GM12878 (cell line): ENCODE measurements at regions of chr2 and their contacts with region 1.

Region 1: GRCh38 chr2:147989809-147990403 is 30.6 kb downstream of the ORC4 start:
- DNase-seq: peak; percentile 31
- ATAC-seq: peak; percentile 91
- H3K4me3 ChIP-seq: no peak overlapping the region
- H3K27ac ChIP-seq: no peak overlapping the region
- H3K4me1 ChIP-seq: peaks cover 3% of the 10 kb centered on the region; the same call in 1 of the 2 replicates
- H3K27me3 ChIP-seq: no peaks in the 10 kb centered on the region
- CTCF ChIP-seq: peak; percentile 47 to 93 (median 64); a peak in 4 of 6 replicates
- EP300 ChIP-seq: no peak
- POLR2A ChIP-seq: no peak
- RAD21 ChIP-seq: peak; percentile 95

Region 2: DNA sequence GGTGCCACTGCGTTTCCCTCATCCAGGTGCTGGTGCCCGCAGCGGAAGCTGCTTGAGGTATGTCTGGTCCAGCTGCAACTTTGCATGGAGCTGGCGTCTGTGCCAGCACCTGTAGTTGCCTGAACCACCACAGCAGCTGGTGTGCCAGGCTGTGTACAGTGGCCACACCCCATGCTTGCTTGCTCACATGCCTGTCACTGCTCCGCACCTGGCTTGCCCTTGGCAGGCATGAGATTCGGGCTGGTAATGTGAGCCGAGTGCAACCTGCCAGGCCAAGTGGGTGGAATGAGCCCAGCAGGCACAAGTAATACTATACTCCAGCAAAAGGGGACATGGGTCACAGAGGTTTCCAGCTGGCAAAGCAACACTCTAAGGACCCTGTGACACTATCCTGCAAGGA is 1268.4 kb before region 1 on chr2:
- CTCF ChIA-PET with region 1: no interaction called
- POLR2A ChIA-PET with region 1: no interaction called
- RAD21 ChIA-PET with region 1: no interaction called
- SMC1A ChIA-PET with region 1: no interaction called
- in situ Hi-C with region 1: no loop called
- intact Hi-C with region 1: no loop called
- DNase-seq: no peak
- ATAC-seq: no peak
- H3K4me3 ChIP-seq: no peak overlapping the region
- H3K27ac ChIP-seq: no peak overlapping the region
- H3K4me1 ChIP-seq: no peaks in the 10 kb centered on the region
- H3K27me3 ChIP-seq: no peaks in the 10 kb centered on the region
- CTCF ChIP-seq: no peak
- EP300 ChIP-seq: no peak
- POLR2A ChIP-seq: no peak
- RAD21 ChIP-seq: no peak

Region 3: DNA sequence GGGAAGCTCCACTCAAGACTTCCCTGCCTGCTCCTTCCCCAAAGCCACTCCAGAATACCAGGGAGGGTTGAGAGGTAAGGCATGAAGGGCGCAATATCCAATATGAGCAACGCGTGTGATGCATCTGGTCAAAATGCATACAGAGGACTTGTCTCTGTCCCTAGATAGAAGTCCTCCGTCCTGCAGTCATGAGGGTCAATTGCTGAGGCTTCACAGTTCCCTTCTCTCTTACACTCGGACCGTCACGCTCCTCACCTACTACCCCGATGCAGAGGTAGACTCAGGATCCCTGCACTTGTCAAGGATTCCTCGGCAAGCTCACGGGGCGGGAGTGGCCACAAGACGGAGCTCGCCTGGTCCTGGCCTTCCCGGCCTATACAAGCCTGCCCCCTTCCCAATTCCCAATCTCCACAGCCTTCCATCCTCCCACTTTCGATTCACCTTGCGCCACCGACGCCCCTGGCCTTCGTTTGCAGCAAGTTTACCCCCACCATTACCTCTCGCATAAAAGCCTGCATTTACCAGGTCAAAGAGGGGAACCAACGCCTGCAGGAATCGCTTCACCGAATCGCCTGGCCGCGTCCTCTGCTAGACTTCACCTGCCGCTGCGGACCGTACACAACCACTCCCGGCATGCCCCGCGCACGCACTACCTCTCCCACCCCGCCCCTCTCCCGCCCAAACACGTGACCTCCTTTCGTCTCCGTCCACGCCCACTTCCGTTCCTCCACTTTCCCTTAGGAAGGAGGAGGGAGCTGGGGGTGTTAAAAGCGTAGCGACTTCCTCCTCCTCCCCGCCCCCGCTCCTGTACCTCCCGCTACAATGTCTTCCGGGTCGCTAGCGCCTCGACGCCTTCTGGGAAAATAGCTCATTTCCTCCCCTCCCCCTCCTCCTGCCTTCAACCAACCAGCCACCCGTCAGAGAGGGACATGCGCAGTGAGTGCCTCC is 30.5 kb after region 1 on chr2 and contains the start of gene ORC4:
- CTCF ChIA-PET with region 1: interaction called, 11 read pairs
- POLR2A ChIA-PET with region 1: interaction called, 8 read pairs
- RAD21 ChIA-PET with region 1: interaction called, 18 read pairs
- SMC1A ChIA-PET with region 1: interaction called, 10 read pairs
- in situ Hi-C with region 1: no loop called
- intact Hi-C with region 1: no loop called
- DNase-seq: peak; percentile 99
- ATAC-seq: peak; percentile 81
- H3K4me3 ChIP-seq: peak within 1 kb of the TSS; percentile 99
- H3K27ac ChIP-seq: peak within 1 kb of the TSS; percentile 96
- H3K4me1 ChIP-seq: no peaks in the 10 kb centered on the region
- H3K27me3 ChIP-seq: no peaks in the 10 kb centered on the region
- CTCF ChIP-seq: peak in 2 of 3 experiments; percentile 19 to 26; a peak in 2 of 6 replicates
- EP300 ChIP-seq: no peak; a peak in 1 of 4 replicates
- POLR2A ChIP-seq: peak; percentile 90
- RAD21 ChIP-seq: peak; percentile 19; the same call in 1 of the 2 replicates
- polyA plus RNA-seq, gene ORC4: 31.3 to 71.3 TPM

Region 4: GRCh38 chr2:148048475-148049221 is 58.7 kb after region 1 on chr2:
- CTCF ChIA-PET with region 1: interaction called, 3 read pairs
- POLR2A ChIA-PET with region 1: no interaction called
- RAD21 ChIA-PET with region 1: interaction called, 18 read pairs
- SMC1A ChIA-PET with region 1: interaction called, 5 read pairs
- in situ Hi-C with region 1: no loop called
- intact Hi-C with region 1: loop called (anchors 2 kb)
- DNase-seq: peak; percentile 89
- ATAC-seq: peak; percentile 82
- H3K4me3 ChIP-seq: 0 out of 2 replicates have a peak overlapping the region, but pooled peaks have one; percentile 7
- H3K27ac ChIP-seq: peak overlapping the region; percentile 67
- H3K4me1 ChIP-seq: peaks cover 27% of the 10 kb centered on the region
- H3K27me3 ChIP-seq: no peaks in the 10 kb centered on the region
- CTCF ChIP-seq: no peak
- EP300 ChIP-seq: peak in 1 of 2 experiments; percentile 65; a peak in 1 of 4 replicates
- POLR2A ChIP-seq: no peak
- RAD21 ChIP-seq: no peak; the same call in 1 of the 2 replicates

Region 5: GRCh38 chr2:148201075-148202004 is 211.4 kb after region 1 on chr2:
- CTCF ChIA-PET with region 1: interaction called, 12 read pairs
- POLR2A ChIA-PET with region 1: no interaction called
- RAD21 ChIA-PET with region 1: interaction called, 10 read pairs
- SMC1A ChIA-PET with region 1: interaction called, 4 read pairs
- in situ Hi-C with region 1: no loop called
- intact Hi-C with region 1: loop called (anchors 1 kb)
- DNase-seq: no peak
- ATAC-seq: peak; percentile 85
- H3K4me3 ChIP-seq: no peak overlapping the region
- H3K27ac ChIP-seq: no peak overlapping the region
- H3K4me1 ChIP-seq: no peaks in the 10 kb centered on the region
- H3K27me3 ChIP-seq: no peaks in the 10 kb centered on the region
- CTCF ChIP-seq: peak in 2 of 3 experiments; percentile 47 to 51; a peak in 4 of 6 replicates
- EP300 ChIP-seq: no peak
- POLR2A ChIP-seq: no peak
- RAD21 ChIP-seq: peak; percentile 45

Region 6: GRCh38 chr2:148989882-148990493 is 1000.1 kb after region 1 on chr2:
- CTCF ChIA-PET with region 1: interaction called, 12 read pairs
- POLR2A ChIA-PET with region 1: no interaction called
- RAD21 ChIA-PET with region 1: interaction called, 3 read pairs
- SMC1A ChIA-PET with region 1: interaction called, 4 read pairs
- in situ Hi-C with region 1: no loop called
- intact Hi-C with region 1: loop called (anchors 2 kb)
- DNase-seq: peak; percentile 23
- ATAC-seq: peak; percentile 98
- H3K4me3 ChIP-seq: no peak overlapping the region
- H3K27ac ChIP-seq: no peak overlapping the region
- H3K4me1 ChIP-seq: no peaks in the 10 kb centered on the region
- H3K27me3 ChIP-seq: no peaks in the 10 kb centered on the region
- CTCF ChIP-seq: peak; percentile 57 to 76 (median 72); a peak in 5 of 6 replicates
- EP300 ChIP-seq: no peak
- POLR2A ChIP-seq: no peak
- RAD21 ChIP-seq: peak; percentile 97